Endothelial cell of umbilical vein (primary cell): ENCODE measurements at regions of chr9 and their contacts with region 1.

Region 1: DNA sequence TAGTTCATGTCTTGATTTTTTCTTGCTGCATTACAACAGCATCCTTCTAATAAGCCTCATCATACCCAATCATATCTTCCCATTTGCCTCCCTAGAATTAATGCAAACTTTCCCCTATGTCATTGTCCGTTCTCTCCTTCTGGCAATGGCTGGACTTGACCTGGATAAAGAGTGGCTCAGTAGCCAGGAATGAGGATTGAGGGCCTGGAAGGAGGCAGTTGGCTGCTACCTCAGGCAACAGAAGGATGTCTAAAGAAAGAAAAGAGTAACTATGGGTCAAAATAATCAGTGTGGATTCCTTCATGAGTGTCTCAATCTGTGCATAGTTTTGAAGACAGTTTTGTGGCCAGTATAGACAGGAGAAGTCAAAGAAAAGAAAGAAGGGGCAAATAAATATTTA is 209.6 kb downstream of the TRPM3 start:
- DNase-seq: no peak
- H3K4me3 ChIP-seq: no peak overlapping the region
- H3K27ac ChIP-seq: no peak overlapping the region
- H3K4me1 ChIP-seq: no peaks in the 10 kb centered on the region
- H3K27me3 ChIP-seq: no peaks in the 10 kb centered on the region
- CTCF ChIP-seq: no peak
- POLR2A ChIP-seq: no peak

Region 2: GRCh38 chr9:70883963-70884793 is 27.6 kb before region 1 on chr9:
- CTCF ChIA-PET with region 1: no interaction called
- POLR2A ChIA-PET with region 1: no interaction called
- dilution Hi-C with region 1: no loop called
- intact Hi-C with region 1: no loop called
- DNase-seq: no peak
- H3K4me3 ChIP-seq: no peak overlapping the region
- H3K27ac ChIP-seq: no peak overlapping the region
- H3K4me1 ChIP-seq: peaks cover 2% of the 10 kb centered on the region
- H3K27me3 ChIP-seq: no peaks in the 10 kb centered on the region
- CTCF ChIP-seq: no peak
- POLR2A ChIP-seq: no peak

Region 3: DNA sequence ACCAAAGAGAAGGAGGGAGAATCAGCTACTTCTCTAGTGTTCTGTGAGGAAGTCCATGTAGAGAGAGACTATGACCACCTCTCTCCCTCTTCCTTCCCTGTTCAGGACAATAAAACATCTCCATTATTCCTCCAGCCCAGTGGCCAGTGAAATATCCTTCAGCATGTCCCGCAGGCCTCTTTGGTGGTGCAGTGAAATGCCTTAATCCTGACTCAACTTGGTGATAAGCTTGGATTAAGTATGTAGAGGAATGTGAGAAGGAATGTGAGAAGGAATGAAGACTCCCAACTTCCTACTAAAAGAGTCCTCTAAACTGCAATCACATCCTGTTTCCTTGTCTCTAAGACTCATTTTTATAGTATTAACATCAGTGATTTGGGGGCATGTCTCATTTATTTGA is 42.3 kb after region 1 on chr9:
- CTCF ChIA-PET with region 1: no interaction called
- POLR2A ChIA-PET with region 1: no interaction called
- dilution Hi-C with region 1: no loop called
- intact Hi-C with region 1: loop called (anchors 1 kb)
- DNase-seq: peak; percentile 6
- H3K4me3 ChIP-seq: no peak overlapping the region
- H3K27ac ChIP-seq: no peak overlapping the region
- H3K4me1 ChIP-seq: peaks cover 2% of the 10 kb centered on the region
- H3K27me3 ChIP-seq: no peaks in the 10 kb centered on the region
- CTCF ChIP-seq: no peak
- POLR2A ChIP-seq: no peak

Region 4: DNA sequence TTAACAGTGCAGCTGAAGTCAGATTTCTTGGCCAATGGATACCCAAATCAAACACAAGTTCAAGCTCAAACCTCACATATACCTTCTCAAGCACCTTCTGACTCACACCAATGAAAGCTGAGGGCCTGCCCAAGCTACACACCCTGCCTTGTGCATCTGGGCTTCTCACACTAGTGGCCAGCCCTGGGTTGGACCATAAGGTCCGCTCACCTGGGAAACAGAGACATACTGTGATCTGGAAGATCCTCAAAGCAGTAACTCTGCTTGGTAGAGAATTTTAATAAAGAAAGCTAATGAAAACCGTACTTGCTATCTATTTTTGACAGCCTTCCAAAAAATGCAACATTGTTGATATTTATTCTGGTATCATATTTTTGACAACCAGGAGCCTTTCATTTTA is 217.0 kb after region 1 on chr9:
- CTCF ChIA-PET with region 1: no interaction called
- POLR2A ChIA-PET with region 1: no interaction called
- dilution Hi-C with region 1: no loop called
- intact Hi-C with region 1: no loop called
- DNase-seq: no peak
- H3K4me3 ChIP-seq: no peak overlapping the region
- H3K27ac ChIP-seq: no peak overlapping the region
- H3K4me1 ChIP-seq: no peaks in the 10 kb centered on the region
- H3K27me3 ChIP-seq: peaks cover 5 to 11% of the 10 kb centered on the region in 2 experiments
- CTCF ChIP-seq: no peak
- POLR2A ChIP-seq: no peak